ENCODE measurements at regions of chrX and their contacts with region 1.

Region 1: GRCh38 chrX:136028251-136028984 is 43.2 kb downstream of the SLC9A6 start:
- DNase-seq: no peak
- ATAC-seq: peak; percentile 75
- H3K4me3 ChIP-seq: no peak overlapping the region
- H3K27ac ChIP-seq: peak overlapping the region in 1 of 2 donors; percentile 97
- H3K4me1 ChIP-seq: no peaks in the 10 kb centered on the region
- H3K27me3 ChIP-seq: no peaks in the 10 kb centered on the region

Region 2: GRCh38 chrX:135944486-135944885 is 83.9 kb before region 1 on chrX:
- intact Hi-C with region 1: no loop called
- DNase-seq: no peak
- ATAC-seq: no peak
- H3K4me3 ChIP-seq: no peak overlapping the region
- H3K27ac ChIP-seq: no peak overlapping the region
- H3K4me1 ChIP-seq: no peaks in the 10 kb centered on the region
- H3K27me3 ChIP-seq: no peaks in the 10 kb centered on the region

Region 3: GRCh38 chrX:136162831-136163570 is 134.6 kb after region 1 on chrX:
- intact Hi-C with region 1: loop called (anchors 2 to 5 kb)
- DNase-seq: peak; percentile 65 to 82
- ATAC-seq: peak; percentile 64
- H3K4me3 ChIP-seq: no peak overlapping the region
- H3K27ac ChIP-seq: peak overlapping the region; percentile 61 to 79
- H3K4me1 ChIP-seq: peaks cover 3 to 4% of the 10 kb centered on the region in 2 donors
- H3K27me3 ChIP-seq: no peaks in the 10 kb centered on the region

Region 4: GRCh38 chrX:136214551-136214950 is 186.1 kb after region 1 on chrX:
- intact Hi-C with region 1: loop called (anchors 2 to 5 kb)
- DNase-seq: no peak
- ATAC-seq: no peak
- H3K4me3 ChIP-seq: no peak overlapping the region
- H3K27ac ChIP-seq: peak overlapping the region in 1 of 2 donors; percentile 74
- H3K4me1 ChIP-seq: no peaks in the 10 kb centered on the region
- H3K27me3 ChIP-seq: no peaks in the 10 kb centered on the region

Region 5: DNA sequence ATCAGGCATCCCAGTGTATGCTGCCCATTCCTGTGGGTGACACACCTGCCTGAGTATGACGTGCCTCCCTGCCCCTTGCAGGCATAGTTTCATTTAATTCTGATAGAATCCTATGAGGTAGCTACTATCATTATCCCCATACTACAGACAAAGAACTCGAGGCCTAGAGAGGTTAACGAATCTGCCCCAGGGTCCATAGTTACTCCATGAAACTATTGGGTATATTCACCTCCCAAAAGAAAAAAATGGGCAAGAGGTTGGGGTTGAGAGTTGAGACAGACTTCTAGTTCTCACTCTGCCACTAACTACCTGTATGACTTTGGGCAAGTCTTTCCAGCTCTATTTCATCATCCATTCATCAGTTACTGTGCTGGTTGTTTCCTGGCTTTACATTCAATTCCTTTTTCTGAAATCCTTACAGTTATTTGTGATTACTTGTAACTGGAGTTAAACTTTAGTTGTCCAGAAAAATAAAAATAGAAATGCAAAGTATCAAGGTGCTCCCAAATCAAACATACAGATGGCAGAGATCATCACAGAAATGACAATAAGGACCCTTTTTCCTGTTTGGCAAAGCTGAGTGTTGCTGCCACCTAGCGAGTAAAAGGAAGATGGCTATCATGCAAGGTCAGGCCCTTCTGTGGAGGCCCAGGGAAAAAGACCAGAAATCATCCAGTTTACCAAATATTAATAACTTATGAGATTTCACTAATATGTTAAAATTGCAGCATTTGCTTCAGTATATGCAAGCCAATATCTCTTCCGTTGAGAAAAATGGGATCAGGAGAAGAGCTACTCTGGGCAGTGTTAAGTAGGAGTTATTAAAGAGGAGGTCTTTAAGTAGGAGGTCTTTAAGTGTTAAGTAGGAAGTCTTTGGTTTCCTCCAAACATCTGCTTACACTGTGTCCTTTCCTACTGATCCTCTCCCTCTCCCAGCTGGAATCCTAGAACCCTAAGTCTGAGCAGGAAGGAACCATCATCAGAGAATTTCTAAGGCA is 239.9 kb after region 1 on chrX:
- intact Hi-C with region 1: loop called (anchors 2 to 5 kb)
- DNase-seq: no peak
- ATAC-seq: peak; percentile 68
- H3K4me3 ChIP-seq: no peak overlapping the region
- H3K27ac ChIP-seq: no peak overlapping the region
- H3K4me1 ChIP-seq: no peaks in the 10 kb centered on the region
- H3K27me3 ChIP-seq: no peaks in the 10 kb centered on the region

Region 6: GRCh38 chrX:136694431-136695087 is 666.1 kb after region 1 on chrX:
- intact Hi-C with region 1: loop called in 1 of 2 experiments (anchors 10 kb)
- DNase-seq: no peak
- ATAC-seq: no peak
- H3K4me3 ChIP-seq: no peak overlapping the region
- H3K27ac ChIP-seq: no peak overlapping the region
- H3K4me1 ChIP-seq: no peaks in the 10 kb centered on the region
- H3K27me3 ChIP-seq: no peaks in the 10 kb centered on the region

Measured in aorta (tissue), 5 donors.